AG04450 (cell line): ENCODE measurements at regions of chr17 and their contacts with region 1.

Region 1: DNA sequence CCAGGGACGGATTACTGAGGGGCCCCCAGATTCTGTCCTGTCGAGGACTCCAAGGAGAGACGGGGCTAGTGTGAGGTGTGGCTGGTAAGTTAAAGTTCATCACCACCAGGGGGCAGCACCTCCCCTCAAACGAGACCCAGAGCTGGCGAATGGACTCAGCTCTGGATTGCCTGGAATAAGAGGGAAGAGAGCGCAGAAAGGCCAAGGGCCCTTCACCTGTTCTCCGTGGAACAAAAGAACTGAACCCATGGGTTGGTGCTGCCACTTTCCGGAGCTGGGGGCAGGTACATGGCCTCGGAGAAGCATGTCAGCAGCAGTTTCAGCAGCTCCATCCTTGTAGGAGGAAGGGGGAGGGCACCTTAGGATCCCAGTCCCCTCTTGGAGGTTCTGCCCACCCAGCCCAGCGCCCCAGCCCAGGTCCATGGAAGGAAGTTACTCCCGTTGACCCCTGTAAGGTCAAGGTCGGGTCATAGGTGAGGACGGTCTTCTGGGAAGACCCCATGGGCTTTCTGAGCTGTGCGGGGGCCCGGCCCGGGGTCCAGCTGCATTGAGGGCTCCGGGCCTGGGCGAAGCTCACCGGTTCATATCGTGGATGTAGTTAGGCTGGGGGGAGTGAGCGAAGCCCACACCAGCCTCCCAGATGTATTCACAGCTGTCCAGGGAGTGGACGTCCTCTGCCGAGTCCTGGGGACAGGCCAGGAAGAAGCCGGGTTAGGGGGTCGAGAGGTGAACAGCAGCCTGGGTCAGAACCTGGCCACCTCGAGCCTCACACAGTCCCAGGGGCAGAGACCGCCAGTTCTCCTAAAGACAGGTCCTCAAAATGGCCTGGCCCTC is 10.7 kb downstream of the HID1 start:
- DNase-seq: peak; percentile 61
- H3K4me3 ChIP-seq: no peak overlapping the region
- H3K27ac ChIP-seq: no peak overlapping the region
- H3K27me3 ChIP-seq: no peaks in the 10 kb centered on the region
- CTCF ChIP-seq: peak; percentile 70

Region 2: GRCh38 chr17:74790161-74791054 is 171.5 kb before region 1 on chr17:
- CTCF ChIA-PET with region 1: interaction called, 24 read pairs
- POLR2A ChIA-PET with region 1: no interaction called
- DNase-seq: no peak
- H3K4me3 ChIP-seq: no peak overlapping the region
- H3K27ac ChIP-seq: no peak overlapping the region
- H3K27me3 ChIP-seq: no peaks in the 10 kb centered on the region
- CTCF ChIP-seq: no peak

Region 3: GRCh38 chr17:74852237-74853047 is 109.4 kb before region 1 on chr17:
- CTCF ChIA-PET with region 1: no interaction called
- POLR2A ChIA-PET with region 1: no interaction called
- DNase-seq: no peak
- H3K4me3 ChIP-seq: no peak overlapping the region
- H3K27ac ChIP-seq: no peak overlapping the region
- H3K27me3 ChIP-seq: peaks cover 63% of the 10 kb centered on the region
- CTCF ChIP-seq: no peak

Region 4: DNA sequence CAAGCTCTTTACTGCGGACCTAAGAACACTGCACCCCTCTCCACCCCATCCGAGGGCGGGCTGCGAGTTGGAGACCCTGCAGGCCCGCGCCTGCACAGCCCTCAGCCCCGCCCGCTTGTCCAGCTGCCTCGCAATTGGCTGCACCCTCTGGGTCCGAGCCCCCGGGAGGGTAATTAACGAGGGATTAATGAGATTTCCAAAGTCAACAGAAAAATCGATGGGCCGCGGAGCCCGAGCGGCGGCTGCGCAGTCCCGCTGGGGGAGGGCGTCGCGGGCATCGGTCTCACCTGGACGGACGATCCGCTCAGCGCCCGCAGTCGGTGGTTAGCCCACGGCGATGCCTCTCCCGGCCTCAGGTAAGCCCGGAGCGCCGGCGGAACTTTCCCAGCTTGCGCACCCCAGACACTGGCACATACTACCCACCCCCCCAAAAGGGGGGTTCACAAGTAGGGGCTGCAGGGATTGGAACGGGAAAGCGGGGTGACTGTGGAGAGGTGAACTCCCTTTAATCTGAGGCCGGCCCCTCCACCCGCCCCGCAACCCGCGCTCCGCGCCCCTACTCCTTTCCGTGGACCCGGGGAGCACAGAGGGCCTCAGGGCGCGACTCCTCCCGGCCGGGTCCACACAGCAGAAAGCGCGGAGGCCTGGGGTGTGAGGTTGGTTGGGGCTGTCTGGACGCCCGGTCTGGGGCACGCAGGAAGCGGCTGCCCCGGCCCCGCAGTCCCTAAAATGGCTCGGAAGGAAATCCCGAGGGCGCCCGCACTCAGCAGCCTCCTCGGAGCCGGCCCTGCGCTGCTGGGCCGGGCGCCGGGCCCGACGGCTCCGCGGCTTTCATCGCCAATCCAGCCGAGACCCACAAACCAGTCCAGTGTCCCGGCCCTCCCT is 26.0 kb before region 1 on chr17 and contains the start of gene OTOP3:
- CTCF ChIA-PET with region 1: interaction called, 10 read pairs
- POLR2A ChIA-PET with region 1: no interaction called
- DNase-seq: no peak
- H3K4me3 ChIP-seq: no peak within 1 kb of the TSS
- H3K27ac ChIP-seq: no peak within 1 kb of the TSS
- H3K27me3 ChIP-seq: peaks cover 68% of the 10 kb centered on the region
- CTCF ChIP-seq: no peak
- polyA plus RNA-seq, gene OTOP3: not detected in 2 replicates

Region 5: GRCh38 chr17:74987418-74987908 is 25.6 kb after region 1 on chr17 and contains the start of gene CDR2L:
- CTCF ChIA-PET with region 1: interaction called, 14 read pairs
- POLR2A ChIA-PET with region 1: interaction called, 4 read pairs
- DNase-seq: peak; percentile 75
- H3K4me3 ChIP-seq: peak within 1 kb of the TSS; percentile 78
- H3K27ac ChIP-seq: peak within 1 kb of the TSS; percentile 97
- H3K27me3 ChIP-seq: no peaks in the 10 kb centered on the region
- CTCF ChIP-seq: no peak
- polyA plus RNA-seq, gene CDR2L: 8.4 and 11.4 TPM in 2 replicates

Region 6: GRCh38 chr17:75059369-75060345 is 97.8 kb after region 1 on chr17:
- CTCF ChIA-PET with region 1: interaction called, 20 read pairs
- POLR2A ChIA-PET with region 1: no interaction called
- DNase-seq: peak; percentile 54
- H3K4me3 ChIP-seq: no peak overlapping the region
- H3K27ac ChIP-seq: no peak overlapping the region
- H3K27me3 ChIP-seq: no peaks in the 10 kb centered on the region
- CTCF ChIP-seq: peak; percentile 65

Region 7: DNA sequence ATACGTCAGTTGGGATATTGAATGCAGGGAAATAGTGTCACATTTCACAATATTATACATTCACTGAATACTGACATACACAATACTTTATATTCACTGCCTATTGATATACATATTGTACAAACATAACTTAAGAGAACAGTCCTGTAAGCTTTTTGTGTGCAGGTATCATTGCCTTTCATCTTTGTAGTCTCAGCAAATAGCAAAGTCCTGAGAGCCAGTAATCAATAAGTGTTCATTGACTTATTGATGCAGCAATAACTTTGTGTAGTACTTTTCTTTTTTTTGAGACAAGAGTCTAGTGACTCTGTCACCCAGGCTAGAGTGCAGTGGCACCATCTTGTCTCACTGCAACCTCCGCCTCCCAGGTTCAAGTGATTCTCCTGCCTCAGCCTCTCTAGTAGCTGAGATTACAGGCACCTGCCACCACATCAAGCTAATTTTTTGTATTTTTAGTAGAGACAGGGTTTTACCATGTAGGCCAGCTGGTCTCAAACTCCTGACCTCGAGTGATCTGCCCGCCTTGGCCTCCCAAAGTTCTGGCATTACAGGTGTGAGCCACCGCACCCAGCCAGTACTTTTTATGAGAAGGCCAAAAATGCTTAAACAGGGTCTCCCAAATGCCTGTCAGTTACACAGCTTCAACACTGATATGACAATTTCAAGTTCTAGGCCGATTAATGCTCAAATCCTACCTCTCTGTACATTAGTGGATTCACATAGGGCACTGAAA is 238.2 kb after region 1 on chr17:
- CTCF ChIA-PET with region 1: interaction called, 36 read pairs
- POLR2A ChIA-PET with region 1: no interaction called
- DNase-seq: no peak
- H3K4me3 ChIP-seq: no peak overlapping the region
- H3K27ac ChIP-seq: no peak overlapping the region
- H3K27me3 ChIP-seq: no peaks in the 10 kb centered on the region
- CTCF ChIP-seq: no peak